Heart left ventricle (tissue), 16 donors: ENCODE measurements at regions of chr20 and their contacts with region 1.

Region 1: DNA sequence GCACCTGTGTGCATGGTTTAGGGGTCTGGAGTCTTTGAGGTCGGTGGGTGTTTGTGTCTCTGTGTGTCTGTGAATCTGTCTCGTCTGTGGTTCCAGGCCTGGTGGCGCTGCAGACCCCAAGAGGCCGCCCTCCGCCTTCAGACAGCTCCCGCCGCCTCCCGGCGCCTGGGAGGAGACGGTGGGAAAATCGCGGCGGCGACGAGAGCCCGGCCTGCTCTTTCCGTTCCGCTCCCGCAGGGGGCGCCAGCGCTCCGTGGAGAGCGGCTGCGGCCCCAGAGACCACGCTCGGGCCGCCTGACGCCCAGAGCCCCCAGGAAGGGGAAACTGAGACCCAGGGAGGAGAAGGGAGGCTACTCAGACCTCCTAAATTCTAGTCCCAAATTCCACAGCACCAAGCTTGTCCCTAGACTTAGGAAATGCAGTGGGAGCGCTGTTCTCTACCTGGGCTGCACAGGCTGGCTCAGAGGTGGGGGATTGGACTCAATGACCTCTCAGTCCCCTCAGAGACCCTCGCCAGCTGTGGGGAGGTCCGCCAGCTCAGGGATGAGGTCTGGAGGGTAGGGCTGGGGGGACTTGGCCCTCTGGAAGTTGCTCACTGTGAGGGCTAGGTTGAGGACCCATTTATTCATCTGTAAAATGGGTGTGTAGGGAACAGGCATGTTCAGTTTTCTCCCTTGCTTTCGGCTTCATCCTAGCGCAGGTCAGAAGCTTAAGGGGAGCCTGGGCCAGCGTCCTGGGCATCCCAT is 36.9 kb upstream of the BLCAP start:
- DNase-seq: peak in 4 of 5 donors; percentile 24 to 69 (median 35)
- ATAC-seq: peak in 3 of 4 donors; percentile 65 to 80 (median 71)
- H3K4me3 ChIP-seq: no peak overlapping the region
- H3K27ac ChIP-seq: no peak overlapping the region
- H3K4me1 ChIP-seq: peaks cover 0 to 8% (median 2%) of the 10 kb centered on the region in 12 donors
- H3K27me3 ChIP-seq: peaks cover 3 to 61% (median 35%) of the 10 kb centered on the region in 9 donors
- CTCF ChIP-seq: peak; percentile 80 to 95 (median 92)
- POLR2A ChIP-seq: no peak

Region 2: DNA sequence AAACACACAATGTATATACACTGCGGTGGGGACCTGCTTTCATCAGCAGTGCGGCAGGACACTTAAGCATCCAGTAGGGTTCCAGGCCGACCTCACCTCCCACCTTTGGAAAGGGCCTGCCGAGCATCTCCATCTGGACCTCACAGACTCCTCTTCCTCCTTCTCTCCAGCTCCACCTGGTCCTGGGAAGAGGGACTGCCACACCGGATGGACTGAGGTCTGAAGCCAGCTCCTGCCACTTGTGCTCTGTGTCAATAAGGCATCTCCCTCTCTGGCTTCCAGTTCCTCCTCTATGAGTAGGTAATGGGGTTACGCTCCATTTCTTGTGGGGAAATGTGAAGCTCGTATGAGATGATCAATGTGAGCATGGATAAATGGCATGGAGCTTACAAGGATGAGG is 62.6 kb before region 1 on chr20:
- intact Hi-C with region 1: no loop called
- DNase-seq: no peak
- ATAC-seq: no peak
- H3K4me3 ChIP-seq: no peak overlapping the region
- H3K27ac ChIP-seq: no peak overlapping the region
- H3K4me1 ChIP-seq: peaks cover 0 to 30% (median 6%) of the 10 kb centered on the region in 12 donors
- H3K27me3 ChIP-seq: no peaks in the 10 kb centered on the region
- CTCF ChIP-seq: no peak
- POLR2A ChIP-seq: no peak

Region 3: DNA sequence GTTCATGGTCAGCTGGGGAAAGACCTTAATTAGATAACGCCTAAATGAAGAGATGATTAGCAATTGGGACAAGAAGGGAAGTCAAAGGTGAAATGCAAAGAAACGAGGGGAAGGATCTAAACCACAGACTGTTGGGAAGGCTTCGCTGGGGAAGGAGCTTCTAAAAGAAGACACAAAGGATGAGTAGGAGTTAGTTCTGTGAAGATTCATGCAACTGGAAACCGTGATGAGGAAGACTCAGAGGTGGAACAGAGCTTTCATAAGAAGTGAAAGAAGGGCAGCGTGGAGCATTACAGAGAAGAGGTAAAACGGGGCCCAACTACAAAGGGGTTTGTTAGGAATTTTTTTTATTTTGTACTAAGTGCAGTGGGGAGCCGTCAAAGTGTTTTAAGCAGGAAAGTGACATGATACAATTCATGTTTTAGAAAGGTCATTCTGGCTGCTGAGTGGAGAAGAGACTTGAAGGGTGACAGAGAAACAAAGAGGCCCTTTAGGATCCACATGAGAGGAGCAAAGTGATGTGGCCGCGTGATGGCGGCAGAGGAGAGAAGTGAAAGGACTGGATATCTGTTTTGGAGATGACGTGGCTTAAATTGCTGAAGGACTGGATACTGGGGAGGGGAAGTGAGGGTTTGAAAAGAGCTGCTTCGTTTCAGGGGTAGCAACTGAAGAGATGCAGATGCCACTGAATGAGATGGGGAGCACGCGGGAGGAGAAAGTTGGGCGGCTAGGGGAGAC is 435.1 kb after region 1 on chr20:
- intact Hi-C with region 1: loop called in 7 of 10 experiments (anchors 5 to 10 kb)
- DNase-seq: no peak
- ATAC-seq: no peak
- H3K4me3 ChIP-seq: no peak overlapping the region
- H3K27ac ChIP-seq: no peak overlapping the region
- H3K4me1 ChIP-seq: peaks cover 0 to 19% (median 5%) of the 10 kb centered on the region in 12 donors
- H3K27me3 ChIP-seq: no peaks in the 10 kb centered on the region
- CTCF ChIP-seq: no peak
- POLR2A ChIP-seq: no peak

Region 4: GRCh38 chr20:38057351-38057972 is 492.9 kb after region 1 on chr20:
- intact Hi-C with region 1: loop called in 1 of 10 experiments (anchors 10 kb)
- DNase-seq: peak; percentile 80 to 93 (median 84)
- ATAC-seq: peak; percentile 70 to 93 (median 90)
- H3K4me3 ChIP-seq: no peak overlapping the region
- H3K27ac ChIP-seq: peak overlapping the region in 3 of 12 donors; percentile 13 to 42 (median 19)
- H3K4me1 ChIP-seq: peaks cover 0 to 31% (median 9%) of the 10 kb centered on the region in 12 donors
- H3K27me3 ChIP-seq: no peaks in the 10 kb centered on the region
- CTCF ChIP-seq: peak; percentile 85 to 96 (median 91)
- POLR2A ChIP-seq: no peak

Region 5: GRCh38 chr20:38321959-38322598 is 757.5 kb after region 1 on chr20:
- intact Hi-C with region 1: loop called in 2 of 10 experiments (anchors 5 to 10 kb)
- DNase-seq: peak in 3 of 5 donors; percentile 30 to 40 (median 38)
- ATAC-seq: peak in 3 of 4 donors; percentile 50 to 71 (median 55)
- H3K4me3 ChIP-seq: no peak overlapping the region
- H3K27ac ChIP-seq: no peak overlapping the region
- H3K4me1 ChIP-seq: no peaks in the 10 kb centered on the region
- H3K27me3 ChIP-seq: peaks cover 0 to 11% (median 4%) of the 10 kb centered on the region in 9 donors
- CTCF ChIP-seq: peak; percentile 31 to 75 (median 62)
- POLR2A ChIP-seq: no peak